Thyroid gland (tissue), 4 donors: ENCODE measurements at regions of chr2 and their contacts with region 1.

Region 1: GRCh38 chr2:950080-950966 is at the start of gene SNTG2:
- DNase-seq: peak; percentile 60 to 66
- H3K4me3 ChIP-seq: peak within 1 kb of the TSS; percentile 4 to 51 (median 50)
- H3K27ac ChIP-seq: no peak within 1 kb of the TSS
- H3K4me1 ChIP-seq: peaks cover 4 to 5% of the 10 kb centered on the region in 2 donors
- H3K27me3 ChIP-seq: no peaks in the 10 kb centered on the region
- CTCF ChIP-seq: no peak
- POLR2A ChIP-seq: peak in 1 of 2 donors; percentile 62
- total RNA-seq, gene SNTG2: 4.2 to 14.2 (median 9.2) TPM

Region 2: GRCh38 chr2:437762-438393 is 512.4 kb before region 1 on chr2:
- intact Hi-C with region 1: no loop called
- DNase-seq: peak in 1 of 2 donors; percentile 24
- H3K4me3 ChIP-seq: no peak overlapping the region
- H3K27ac ChIP-seq: no peak overlapping the region
- H3K4me1 ChIP-seq: no peaks in the 10 kb centered on the region
- H3K27me3 ChIP-seq: no peaks in the 10 kb centered on the region
- CTCF ChIP-seq: no peak
- POLR2A ChIP-seq: no peak

Region 3: GRCh38 chr2:850429-850828 is 99.9 kb before region 1 on chr2:
- intact Hi-C with region 1: no loop called
- DNase-seq: no peak
- H3K4me3 ChIP-seq: no peak overlapping the region
- H3K27ac ChIP-seq: no peak overlapping the region
- H3K4me1 ChIP-seq: peaks cover 0 to 14% of the 10 kb centered on the region in 2 donors
- H3K27me3 ChIP-seq: no peaks in the 10 kb centered on the region
- CTCF ChIP-seq: no peak
- POLR2A ChIP-seq: no peak

Region 4: GRCh38 chr2:1550658-1551316 is 600.5 kb after region 1 on chr2:
- intact Hi-C with region 1: loop called (anchors 10 kb)
- DNase-seq: peak; percentile 66 to 69
- H3K4me3 ChIP-seq: no peak overlapping the region
- H3K27ac ChIP-seq: no peak overlapping the region
- H3K4me1 ChIP-seq: peaks cover 0 to 6% of the 10 kb centered on the region in 2 donors
- H3K27me3 ChIP-seq: no peaks in the 10 kb centered on the region
- CTCF ChIP-seq: peak; percentile 78 to 97 (median 88)
- POLR2A ChIP-seq: no peak